ENCODE measurements at regions of chr1 and their contacts with region 1.

Region 1: GRCh38 chr1:212455803-212456528 is 23.2 kb downstream of the NENF start:
- DNase-seq: peak; percentile 85
- H3K4me3 Mint-ChIP-seq: no peak overlapping the region
- H3K27ac Mint-ChIP-seq: no peak overlapping the region
- H3K4me1 Mint-ChIP-seq: peaks cover 4% of the 10 kb centered on the region
- H3K27me3 Mint-ChIP-seq: no peaks in the 10 kb centered on the region

Region 2: DNA sequence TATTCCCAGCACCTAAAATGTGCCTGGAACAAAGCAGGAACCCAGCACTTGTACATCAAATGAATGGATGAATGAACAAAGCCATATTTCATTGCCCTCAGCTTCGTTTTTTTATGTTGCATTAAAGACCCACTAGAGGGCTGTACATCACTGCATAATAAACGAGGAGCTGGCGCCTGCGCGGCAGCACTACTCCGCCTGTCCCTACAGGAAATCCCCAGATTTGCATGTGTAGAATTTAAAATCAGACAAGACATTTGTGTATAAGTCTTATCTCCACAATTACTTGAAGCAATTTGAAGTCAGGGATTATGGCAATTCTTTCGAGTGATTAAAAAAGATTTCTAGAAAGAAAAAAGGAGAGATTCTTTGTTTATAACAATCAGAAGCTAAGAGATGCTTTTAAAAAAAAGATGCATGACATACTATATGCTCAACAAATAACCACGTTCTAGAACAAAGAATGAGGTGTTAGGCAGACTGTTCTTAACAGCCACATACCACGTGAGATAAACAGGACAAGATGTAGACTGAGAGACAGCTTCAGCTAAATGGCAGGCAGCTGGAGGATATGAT is 775.1 kb before region 1 on chr1:
- CTCF ChIA-PET with region 1: interaction called, 55 read pairs
- POLR2A ChIA-PET with region 1: interaction called, 7 read pairs
- DNase-seq: peak; percentile 76
- H3K4me3 Mint-ChIP-seq: no peak overlapping the region
- H3K27ac Mint-ChIP-seq: peak overlapping the region; percentile 58
- H3K4me1 Mint-ChIP-seq: peaks cover 15% of the 10 kb centered on the region
- H3K27me3 Mint-ChIP-seq: peaks cover 2% of the 10 kb centered on the region

Region 3: DNA sequence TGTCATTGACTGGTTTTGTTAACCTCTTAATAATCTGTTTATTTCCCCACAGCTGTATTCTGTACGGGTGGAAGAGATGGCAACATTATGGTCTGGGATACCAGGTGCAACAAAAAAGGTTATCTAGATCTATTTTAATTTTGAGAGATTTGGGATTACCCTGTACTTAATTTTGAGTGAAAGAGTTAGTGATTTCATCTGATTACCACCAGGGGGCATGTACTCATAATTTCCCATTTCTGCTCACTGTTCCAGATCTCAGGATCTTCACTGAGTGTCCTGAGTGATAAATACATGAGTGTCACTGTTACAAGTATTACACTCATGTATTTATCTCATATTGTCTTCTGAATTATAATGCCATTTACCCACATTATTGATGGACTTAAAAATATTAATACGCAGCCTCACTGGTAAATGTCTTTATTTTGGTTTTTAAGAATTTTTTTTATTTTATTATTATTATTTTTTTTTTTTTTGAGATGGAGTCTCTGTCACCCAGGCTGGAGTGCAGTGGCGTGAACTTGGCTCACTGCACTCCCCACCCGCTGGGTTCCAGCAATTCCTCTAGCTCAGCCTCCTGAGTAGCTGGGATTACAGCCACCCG is 393.0 kb before region 1 on chr1:
- CTCF ChIA-PET with region 1: interaction called, 59 read pairs
- POLR2A ChIA-PET with region 1: no interaction called
- DNase-seq: no peak
- H3K4me3 Mint-ChIP-seq: no peak overlapping the region
- H3K27ac Mint-ChIP-seq: no peak overlapping the region
- H3K4me1 Mint-ChIP-seq: peaks cover 5% of the 10 kb centered on the region
- H3K27me3 Mint-ChIP-seq: no peaks in the 10 kb centered on the region

Region 4: DNA sequence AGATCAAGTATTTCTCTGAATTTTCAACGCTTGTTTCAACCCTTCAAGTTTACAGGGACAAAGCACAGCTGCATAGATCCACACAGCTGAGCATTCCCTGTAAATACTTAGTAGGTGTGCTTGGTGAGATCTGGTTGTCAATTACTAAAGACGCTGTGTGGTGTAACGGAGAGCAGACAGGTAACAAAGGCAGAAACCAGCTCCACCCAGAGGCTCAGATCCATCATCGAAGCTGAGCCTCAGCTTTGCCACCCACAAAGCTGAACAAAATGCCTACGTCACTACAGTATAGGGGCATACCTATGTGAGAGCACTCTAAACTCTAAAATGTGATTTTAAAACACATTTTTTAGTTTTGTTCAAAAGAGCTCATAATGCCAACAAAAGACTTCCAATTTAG is 80.0 kb before region 1 on chr1:
- CTCF ChIA-PET with region 1: interaction called, 15 read pairs
- POLR2A ChIA-PET with region 1: no interaction called
- DNase-seq: no peak
- H3K4me3 Mint-ChIP-seq: no peak overlapping the region
- H3K27ac Mint-ChIP-seq: no peak overlapping the region
- H3K4me1 Mint-ChIP-seq: no peaks in the 10 kb centered on the region
- H3K27me3 Mint-ChIP-seq: no peaks in the 10 kb centered on the region

Region 5: DNA sequence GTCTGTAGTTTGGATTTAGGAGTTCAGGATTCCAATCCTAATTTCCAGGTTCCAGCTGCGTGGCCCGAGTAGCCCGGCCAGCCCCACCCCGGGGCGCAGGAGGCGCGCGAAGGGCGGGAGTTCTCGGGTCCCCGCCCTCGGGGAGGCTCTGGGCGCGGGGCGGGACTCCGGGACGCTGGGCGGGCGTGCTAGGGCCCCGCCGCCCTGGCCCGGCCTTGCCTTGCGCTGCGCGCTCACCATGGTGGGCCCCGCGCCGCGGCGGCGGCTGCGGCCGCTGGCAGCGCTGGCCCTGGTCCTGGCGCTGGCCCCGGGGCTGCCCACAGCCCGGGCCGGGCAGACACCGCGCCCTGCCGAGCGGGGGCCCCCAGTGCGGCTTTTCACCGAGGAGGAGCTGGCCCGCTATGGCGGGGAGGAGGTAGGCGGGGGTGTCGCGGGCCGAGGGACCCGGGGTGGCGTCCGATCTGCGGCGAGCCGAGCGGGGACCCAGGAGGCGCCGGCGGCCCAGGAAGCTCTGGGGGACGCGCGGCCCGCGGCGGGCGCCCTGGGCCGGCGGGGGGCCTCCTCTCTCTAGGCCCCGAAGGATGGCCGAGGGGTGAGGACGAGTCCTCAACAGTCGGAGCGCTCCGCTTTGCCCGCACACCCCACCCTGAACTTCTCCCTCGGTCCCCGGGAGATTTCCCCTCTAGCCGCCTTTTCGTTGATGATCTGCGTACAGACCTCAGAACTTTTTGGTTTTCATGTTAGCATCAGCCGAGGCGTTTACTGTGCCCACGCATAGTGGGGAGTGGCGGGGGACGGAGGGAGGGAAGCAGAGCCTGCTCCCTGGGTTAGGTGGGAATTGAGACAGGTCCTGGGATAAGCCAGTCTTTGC is 23.0 kb before region 1 on chr1 and contains the start of gene NENF:
- CTCF ChIA-PET with region 1: interaction called, 26 read pairs
- POLR2A ChIA-PET with region 1: interaction called, 13 read pairs
- DNase-seq: peak; percentile 82
- H3K4me3 Mint-ChIP-seq: peak within 1 kb of the TSS; percentile 74
- H3K27ac Mint-ChIP-seq: no peak within 1 kb of the TSS
- H3K4me1 Mint-ChIP-seq: peaks cover 23% of the 10 kb centered on the region
- H3K27me3 Mint-ChIP-seq: peaks cover 2% of the 10 kb centered on the region
- total RNA-seq, gene NENF: 25.6 to 28.5 TPM

Region 6: GRCh38 chr1:212558693-212559480 is 102.9 kb after region 1 on chr1:
- CTCF ChIA-PET with region 1: interaction called, 15 read pairs
- POLR2A ChIA-PET with region 1: no interaction called
- DNase-seq: peak; percentile 94
- H3K4me3 Mint-ChIP-seq: peak overlapping the region; percentile 71
- H3K27ac Mint-ChIP-seq: peak overlapping the region; percentile 85
- H3K4me1 Mint-ChIP-seq: peaks cover 16% of the 10 kb centered on the region
- H3K27me3 Mint-ChIP-seq: peaks cover 35% of the 10 kb centered on the region

Region 7: GRCh38 chr1:212791676-212792395 is 335.9 kb after region 1 on chr1 and contains the starts of genes NSL1 and TATDN3:
- CTCF ChIA-PET with region 1: interaction called, 13 read pairs
- POLR2A ChIA-PET with region 1: no interaction called
- DNase-seq: peak; percentile 94
- H3K4me3 Mint-ChIP-seq: peak within 1 kb of the TSS; percentile 100
- H3K27ac Mint-ChIP-seq: peak within 1 kb of the TSS; percentile 95
- H3K4me1 Mint-ChIP-seq: peaks cover 49% of the 10 kb centered on the region
- H3K27me3 Mint-ChIP-seq: no peaks in the 10 kb centered on the region
- total RNA-seq, gene NSL1: 36.4 to 38.1 TPM
- total RNA-seq, gene TATDN3: 18.6 to 20.2 TPM

Measured in activated CD4-positive, alpha-beta memory T cell treated with anti-CD3 and anti-CD28 coated beads, Interleukin-2, amount 10 ng/mL, durations not matched to agents 7 days and 5 days (primary cell).